ENCODE measurements at regions of chr15 and their contacts with region 1.

Region 1: DNA sequence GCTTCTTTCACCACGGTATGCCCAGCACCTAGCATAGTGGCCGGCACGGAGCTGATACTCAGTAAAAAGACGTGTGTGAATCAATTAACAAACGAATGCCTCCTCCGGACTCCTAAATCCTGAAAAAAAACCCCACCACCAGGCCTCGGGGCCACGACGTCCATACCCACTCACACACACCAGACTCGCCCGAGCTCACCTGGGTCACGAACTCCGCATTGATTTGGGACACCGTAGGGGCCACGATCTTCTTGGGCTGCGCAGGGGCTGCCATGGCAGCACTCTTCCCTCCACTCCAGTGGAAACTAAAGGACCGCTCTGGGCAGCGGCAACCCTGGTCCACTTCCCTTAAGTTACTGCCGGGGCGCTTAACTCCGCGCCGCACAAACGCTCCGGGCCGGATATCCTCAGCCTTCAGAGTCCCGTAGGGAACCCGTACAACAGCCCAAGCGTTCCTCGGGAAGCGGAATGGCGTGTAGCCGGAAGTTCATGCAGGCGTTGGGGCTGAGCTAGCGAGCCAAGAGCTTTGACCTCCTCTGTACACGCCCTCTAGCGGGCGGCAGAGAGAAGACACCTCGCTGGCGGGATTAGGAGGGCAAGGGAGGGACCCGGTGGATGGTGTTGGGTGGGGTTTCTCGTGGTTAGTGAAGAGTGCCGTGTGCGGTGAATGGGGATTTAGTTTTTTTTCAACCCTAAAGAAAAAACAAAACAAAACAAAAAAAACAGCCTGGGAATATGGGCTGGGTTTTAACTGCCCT is at the start of gene AQR:
- H3K4me3 Mint-ChIP-seq: peak within 1 kb of the TSS; percentile 99
- H3K27ac Mint-ChIP-seq: peak within 1 kb of the TSS; percentile 95
- H3K4me1 Mint-ChIP-seq: peaks cover 42% of the 10 kb centered on the region
- H3K27me3 Mint-ChIP-seq: no peaks in the 10 kb centered on the region

Region 2: GRCh38 chr15:34223904-34224596 is 745.5 kb before region 1 on chr15:
- intact Hi-C with region 1: loop called (anchors 10 kb)
- H3K4me3 Mint-ChIP-seq: peak overlapping the region; percentile 92
- H3K27ac Mint-ChIP-seq: peak overlapping the region; percentile 100
- H3K4me1 Mint-ChIP-seq: peaks cover 20% of the 10 kb centered on the region
- H3K27me3 Mint-ChIP-seq: no peaks in the 10 kb centered on the region

Region 3: DNA sequence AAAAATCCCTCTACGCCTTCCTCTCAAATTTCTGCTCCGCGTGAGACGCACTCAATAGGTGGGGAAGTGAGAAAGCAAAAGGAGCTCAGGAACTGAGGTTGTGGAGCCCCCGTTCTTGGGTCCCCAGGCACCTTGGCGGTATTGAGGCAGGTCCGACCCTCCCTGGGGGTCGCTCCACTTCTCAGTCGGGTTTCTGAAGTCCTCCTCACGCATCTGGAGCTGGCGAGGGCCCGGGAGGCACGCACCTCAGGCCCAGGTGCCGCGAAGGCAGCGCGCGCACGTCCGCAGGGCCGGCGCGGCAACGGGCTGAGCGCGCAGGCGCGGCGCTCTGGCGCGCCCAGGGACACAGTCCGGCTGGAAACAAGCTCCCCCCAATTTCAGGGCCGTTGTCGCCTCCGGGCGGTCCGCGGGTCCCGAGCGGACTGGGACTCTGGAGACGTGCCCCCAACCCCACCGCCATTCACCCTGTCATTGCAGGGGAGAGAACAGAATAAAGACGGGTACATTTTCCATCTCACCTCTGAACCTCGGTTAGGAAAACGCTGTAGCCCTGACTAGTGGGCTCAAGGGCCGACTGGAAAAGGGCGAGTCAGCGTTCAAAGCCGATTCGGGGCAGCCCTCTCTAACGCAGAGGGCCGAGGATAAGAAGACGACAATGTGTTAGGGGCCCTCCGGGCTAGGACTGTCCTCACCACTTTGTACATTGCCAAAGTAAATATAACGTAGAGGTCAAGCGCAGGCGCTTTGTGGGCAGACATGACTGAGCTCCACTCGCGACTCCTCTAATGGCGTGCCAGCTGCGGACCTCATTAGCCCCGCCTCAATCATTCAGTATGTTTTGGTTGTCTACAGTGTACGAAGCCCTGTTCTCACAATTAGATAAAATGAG is 18.7 kb after region 1 on chr15 and contains the start of gene ZNF770:
- intact Hi-C with region 1: loop called (anchors 2 kb)
- H3K4me3 Mint-ChIP-seq: peak within 1 kb of the TSS; percentile 93
- H3K27ac Mint-ChIP-seq: peak within 1 kb of the TSS; percentile 100
- H3K4me1 Mint-ChIP-seq: peaks cover 25% of the 10 kb centered on the region
- H3K27me3 Mint-ChIP-seq: peaks cover 5% of the 10 kb centered on the region

Measured in dendritic cell treated with granulocyte-macrophage colony-stimulating factor and Interleukin-4, amounts not matched to agents 40 ng/mL and 50 ng/mL, for 4 days (primary cell).